CD14-positive monocyte (primary cell): ENCODE measurements at regions of chr10 and their contacts with region 1.

Region 1: DNA sequence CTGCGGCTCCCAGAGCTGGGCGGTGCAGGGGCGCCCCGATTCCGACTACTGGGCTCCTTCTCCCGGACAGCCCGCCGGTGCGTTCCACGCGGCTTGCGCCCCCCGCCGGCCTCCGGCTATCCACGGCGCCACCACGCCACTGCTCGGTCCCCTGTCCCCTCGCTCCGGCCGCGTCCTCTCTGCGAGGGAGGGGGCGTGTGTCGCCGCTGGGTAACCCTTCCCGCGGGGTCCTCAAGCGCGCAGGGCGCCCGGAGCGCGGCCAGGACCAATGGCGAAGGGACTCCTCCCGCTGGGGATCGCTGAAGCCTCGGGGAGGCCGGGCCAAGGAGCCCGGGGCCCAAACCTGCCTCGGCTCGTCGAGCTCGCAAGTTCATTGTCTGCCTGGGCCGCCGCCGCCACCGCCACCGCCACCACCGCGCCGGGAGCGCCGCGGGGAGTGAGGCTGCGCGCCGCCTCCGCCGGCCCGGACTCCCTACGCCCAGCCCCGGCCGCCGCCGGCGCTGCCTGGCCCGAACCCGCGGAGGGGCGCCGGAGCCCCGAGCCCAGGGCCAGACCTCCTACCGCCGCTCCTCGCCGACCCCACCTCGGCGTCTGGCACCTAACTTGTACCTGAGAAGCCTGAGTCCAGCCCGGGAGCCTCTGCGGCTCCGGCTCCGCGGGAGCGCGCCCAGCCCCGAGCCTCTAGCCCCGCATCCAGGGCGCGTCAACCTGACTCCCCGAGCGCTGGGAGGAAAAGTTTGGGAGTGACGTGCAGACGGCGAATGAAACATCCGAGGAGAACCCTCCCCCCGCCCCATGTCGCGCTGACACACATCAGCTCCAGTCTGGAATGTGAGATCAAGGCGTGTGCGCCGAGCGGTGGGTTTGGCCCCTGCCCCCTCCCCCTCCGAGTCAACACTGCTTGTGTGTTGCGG is at the start of gene CHST15:
- DNase-seq: peak; percentile 42 to 71 (median 71)
- H3K4me3 ChIP-seq: peak within 1 kb of the TSS; percentile 80 to 99 (median 96)
- H3K4me3 Mint-ChIP-seq: peak within 1 kb of the TSS; percentile 95 to 98
- H3K27ac ChIP-seq: peak within 1 kb of the TSS; percentile 83 to 92
- H3K27ac Mint-ChIP-seq: peak within 1 kb of the TSS; percentile 92 to 96 (median 95)
- H3K4me1 ChIP-seq: peaks cover 39 to 50% of the 10 kb centered on the region in 2 donors
- H3K4me1 Mint-ChIP-seq: peaks cover 49% of the 10 kb centered on the region
- H3K27me3 ChIP-seq: peaks cover 0 to 22% of the 10 kb centered on the region in 2 donors
- H3K27me3 Mint-ChIP-seq: peaks cover 26 to 42% (median 40%) of the 10 kb centered on the region in 3 donors
- CTCF ChIP-seq: no peak
- polyA plus RNA-seq, gene CHST15: 54.4 to 106 (median 87.5) TPM

Region 2: GRCh38 chr10:123522702-123523312 is 570.3 kb before region 1 on chr10:
- intact Hi-C with region 1: no loop called
- DNase-seq: no peak
- H3K4me3 ChIP-seq: no peak overlapping the region
- H3K4me3 Mint-ChIP-seq: no peak overlapping the region
- H3K27ac ChIP-seq: no peak overlapping the region
- H3K27ac Mint-ChIP-seq: no peak overlapping the region
- H3K4me1 ChIP-seq: peaks cover 17 to 20% of the 10 kb centered on the region in 2 donors
- H3K4me1 Mint-ChIP-seq: peaks cover 19% of the 10 kb centered on the region
- H3K27me3 ChIP-seq: no peaks in the 10 kb centered on the region
- H3K27me3 Mint-ChIP-seq: peaks cover 6 to 12% (median 8%) of the 10 kb centered on the region in 3 donors
- CTCF ChIP-seq: no peak

Region 3: DNA sequence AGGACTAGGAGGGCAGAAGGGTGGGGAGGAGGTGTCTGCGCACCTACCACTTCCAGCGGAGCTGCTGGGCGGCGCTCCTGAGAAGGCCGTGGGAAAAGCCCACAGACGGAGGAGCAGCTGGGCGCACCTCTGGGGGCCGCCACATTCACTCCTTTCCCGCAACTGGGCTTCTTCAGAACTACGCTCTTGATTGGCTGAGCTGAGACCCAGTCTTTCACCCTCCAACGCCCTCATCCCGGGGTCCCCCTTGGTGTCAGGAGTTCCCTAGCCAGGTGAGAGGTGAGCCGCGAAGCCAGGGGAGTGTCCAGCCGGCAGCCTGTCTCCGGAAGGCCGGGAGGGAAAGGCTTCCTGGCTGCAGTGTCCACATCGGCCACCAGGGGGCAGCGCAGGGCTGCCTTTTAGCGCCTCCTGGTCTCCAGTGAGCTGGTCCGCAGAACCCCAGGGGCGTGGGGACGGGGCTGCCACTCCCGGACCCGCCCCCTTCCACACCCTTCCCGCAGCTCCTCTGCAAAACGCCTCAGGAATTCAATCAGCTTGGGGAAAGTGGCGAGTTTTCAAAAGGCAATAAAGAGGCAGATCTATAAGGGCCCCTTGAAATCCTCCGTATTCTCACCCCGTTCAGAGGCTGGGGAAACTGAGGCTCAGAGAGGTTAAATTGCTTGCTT is 98.6 kb before region 1 on chr10:
- intact Hi-C with region 1: loop called (anchors 1 to 5 kb)
- DNase-seq: peak; percentile 81 to 83 (median 81)
- H3K4me3 ChIP-seq: peak overlapping the region; percentile 21 to 75 (median 28)
- H3K4me3 Mint-ChIP-seq: peak overlapping the region; percentile 74 to 79
- H3K27ac ChIP-seq: peak overlapping the region in 1 of 2 donors; percentile 98
- H3K27ac Mint-ChIP-seq: peak overlapping the region; percentile 57 to 100 (median 98)
- H3K4me1 ChIP-seq: peaks cover 56 to 64% of the 10 kb centered on the region in 2 donors
- H3K4me1 Mint-ChIP-seq: peaks cover 63% of the 10 kb centered on the region
- H3K27me3 ChIP-seq: peaks cover 31 to 46% of the 10 kb centered on the region in 2 donors
- H3K27me3 Mint-ChIP-seq: peaks cover 47 to 58% (median 51%) of the 10 kb centered on the region in 3 donors
- CTCF ChIP-seq: peak; percentile 98

Region 4: DNA sequence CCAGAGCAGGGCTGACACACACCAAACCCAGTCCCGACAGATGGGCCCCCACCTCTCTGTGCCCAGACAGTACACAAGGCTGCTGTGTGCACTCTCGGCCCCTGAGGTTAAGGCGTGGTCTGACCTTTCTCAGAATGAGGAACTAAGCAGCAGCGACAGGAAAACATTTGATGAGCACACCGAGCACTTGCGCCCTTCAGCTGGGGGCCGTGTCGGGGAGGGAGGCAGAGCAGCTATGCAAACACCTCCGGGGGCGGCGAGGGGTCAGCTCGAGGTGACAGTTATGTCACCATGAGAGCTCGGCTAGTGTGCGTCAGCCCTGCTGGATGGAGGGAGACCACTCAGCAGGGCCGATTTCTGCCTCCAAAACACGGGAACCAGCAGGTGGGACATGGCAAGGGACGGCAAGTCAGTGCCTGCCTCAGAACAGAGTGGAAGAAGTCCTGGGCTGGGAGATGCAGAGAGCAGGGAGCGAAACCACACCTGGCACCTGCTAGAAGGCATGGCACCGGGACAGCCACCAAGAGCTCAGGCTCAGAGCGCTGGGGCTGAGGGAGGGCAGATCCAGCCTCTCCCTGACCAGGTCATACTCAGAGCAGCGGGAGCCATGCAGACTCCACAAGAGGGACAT is 57.1 kb before region 1 on chr10:
- intact Hi-C with region 1: loop called (anchors 2 to 5 kb)
- DNase-seq: peak; percentile 96 to 98 (median 96)
- H3K4me3 ChIP-seq: peak overlapping the region in 1 of 3 experiments; percentile 39
- H3K4me3 Mint-ChIP-seq: peak overlapping the region; percentile 66 to 75
- H3K27ac ChIP-seq: peak overlapping the region; percentile 63 to 88
- H3K27ac Mint-ChIP-seq: peak overlapping the region; percentile 97 to 100 (median 99)
- H3K4me1 ChIP-seq: peaks cover 83% of the 10 kb centered on the region in 2 donors
- H3K4me1 Mint-ChIP-seq: peaks cover 76% of the 10 kb centered on the region
- H3K27me3 ChIP-seq: no peaks in the 10 kb centered on the region
- H3K27me3 Mint-ChIP-seq: peaks cover 0 to 8% (median 4%) of the 10 kb centered on the region in 3 donors
- CTCF ChIP-seq: no peak

Region 5: GRCh38 chr10:124145109-124145870 is 52.2 kb after region 1 on chr10:
- intact Hi-C with region 1: loop called (anchors 2 kb)
- DNase-seq: peak; percentile 95 to 97 (median 96)
- H3K4me3 ChIP-seq: peak overlapping the region in 1 of 3 experiments; percentile 42
- H3K4me3 Mint-ChIP-seq: peak overlapping the region in 1 of 2 donors; percentile 51
- H3K27ac ChIP-seq: peak overlapping the region; percentile 96 to 99
- H3K27ac Mint-ChIP-seq: no peak overlapping the region
- H3K4me1 ChIP-seq: peaks cover 72 to 80% of the 10 kb centered on the region in 2 donors
- H3K4me1 Mint-ChIP-seq: peaks cover 48% of the 10 kb centered on the region
- H3K27me3 ChIP-seq: no peaks in the 10 kb centered on the region
- H3K27me3 Mint-ChIP-seq: peaks cover 0 to 16% (median 2%) of the 10 kb centered on the region in 3 donors
- CTCF ChIP-seq: no peak

Region 6: GRCh38 chr10:124152916-124153826 is 60.1 kb after region 1 on chr10:
- intact Hi-C with region 1: loop called in 1 of 2 experiments (anchors 2 kb)
- DNase-seq: peak; percentile 80 to 89 (median 81)
- H3K4me3 ChIP-seq: peak overlapping the region in 1 of 3 experiments; percentile 59
- H3K4me3 Mint-ChIP-seq: no peak overlapping the region
- H3K27ac ChIP-seq: peak overlapping the region; percentile 65 to 74
- H3K27ac Mint-ChIP-seq: peak overlapping the region in 1 of 7 donors; percentile 68
- H3K4me1 ChIP-seq: peaks cover 52 to 71% of the 10 kb centered on the region in 2 donors
- H3K4me1 Mint-ChIP-seq: peaks cover 29% of the 10 kb centered on the region
- H3K27me3 ChIP-seq: no peaks in the 10 kb centered on the region
- H3K27me3 Mint-ChIP-seq: peaks cover 0 to 11% (median 8%) of the 10 kb centered on the region in 3 donors
- CTCF ChIP-seq: no peak

Region 7: DNA sequence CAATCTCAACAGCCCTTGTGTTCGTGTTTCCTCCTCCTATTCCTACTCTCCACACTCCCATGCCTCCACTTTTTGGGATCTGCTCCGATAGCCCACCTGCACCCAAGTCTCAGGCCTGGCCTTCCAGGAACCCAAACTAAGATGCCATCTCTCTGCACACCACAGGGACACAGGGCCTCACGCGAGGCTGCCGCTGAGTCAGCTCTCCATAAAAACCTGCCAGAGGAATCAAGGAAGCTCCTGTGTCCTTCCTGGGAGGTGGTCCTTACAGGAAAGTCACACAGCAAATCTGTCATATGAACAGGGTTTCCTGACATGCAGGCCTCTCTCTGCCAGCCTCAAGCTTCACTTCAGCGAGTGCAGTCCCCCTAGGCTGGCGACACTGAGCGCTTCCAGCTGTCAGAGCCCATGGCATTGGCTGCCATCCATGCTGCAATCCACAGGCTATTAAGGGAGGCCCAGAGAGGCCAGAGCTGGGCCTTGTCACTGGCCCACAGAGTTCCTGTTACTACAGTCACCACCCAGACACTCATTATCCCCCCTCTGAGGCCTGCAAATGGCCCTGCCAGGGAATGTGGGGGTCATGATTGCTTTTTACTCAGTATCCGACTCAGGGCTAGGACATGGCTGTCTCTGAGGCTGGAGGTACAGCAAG is 174.2 kb after region 1 on chr10:
- intact Hi-C with region 1: loop called in 1 of 2 experiments (anchors 10 kb)
- DNase-seq: no peak
- H3K4me3 ChIP-seq: no peak overlapping the region
- H3K4me3 Mint-ChIP-seq: no peak overlapping the region
- H3K27ac ChIP-seq: no peak overlapping the region
- H3K27ac Mint-ChIP-seq: peak overlapping the region in 5 of 7 donors; percentile 54 to 66 (median 62)
- H3K4me1 ChIP-seq: peaks cover 20 to 34% of the 10 kb centered on the region in 2 donors
- H3K4me1 Mint-ChIP-seq: peaks cover 42% of the 10 kb centered on the region
- H3K27me3 ChIP-seq: no peaks in the 10 kb centered on the region
- H3K27me3 Mint-ChIP-seq: peaks cover 7 to 13% (median 7%) of the 10 kb centered on the region in 3 donors
- CTCF ChIP-seq: no peak

Region 8: GRCh38 chr10:124388823-124389612 is 295.9 kb after region 1 on chr10:
- intact Hi-C with region 1: loop called in 1 of 2 experiments (anchors 5 kb)
- DNase-seq: peak; percentile 86 to 90 (median 88)
- H3K4me3 ChIP-seq: peak overlapping the region; percentile 28 to 69 (median 35)
- H3K4me3 Mint-ChIP-seq: peak overlapping the region; percentile 52 to 55
- H3K27ac ChIP-seq: peak overlapping the region in 1 of 2 donors; percentile 72
- H3K27ac Mint-ChIP-seq: peak overlapping the region in 3 of 7 donors; percentile 22 to 71 (median 57)
- H3K4me1 ChIP-seq: peaks cover 13 to 15% of the 10 kb centered on the region in 2 donors
- H3K4me1 Mint-ChIP-seq: peaks cover 6% of the 10 kb centered on the region
- H3K27me3 ChIP-seq: peaks cover 0 to 16% of the 10 kb centered on the region in 2 donors
- H3K27me3 Mint-ChIP-seq: peaks cover 5 to 25% (median 18%) of the 10 kb centered on the region in 3 donors
- CTCF ChIP-seq: peak; percentile 91